Sciatic nerve (tissue), 2 donors: ENCODE measurements at regions of chr3 and their contacts with region 1.

Region 1: DNA sequence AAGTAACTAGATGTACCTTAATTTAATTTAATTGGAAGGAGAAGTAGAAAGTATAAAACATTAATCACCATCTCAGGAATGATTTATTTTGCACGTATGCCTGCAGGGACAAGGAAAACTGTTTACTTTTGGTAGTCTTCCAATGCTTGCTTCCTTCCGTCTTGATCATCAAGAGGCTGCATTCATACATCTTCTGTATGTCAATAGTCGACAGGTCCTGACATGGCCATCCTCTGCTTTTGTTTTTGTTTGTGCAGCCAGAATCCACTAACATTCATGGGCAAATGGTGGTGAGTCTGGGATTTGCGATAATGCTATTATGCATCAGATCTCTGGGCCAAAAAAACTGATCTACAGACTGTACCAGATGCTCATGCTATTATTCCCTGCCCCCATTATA is 56.6 kb upstream of the ZPLD1 start:
- DNase-seq: no peak
- ATAC-seq: no peak

Region 2: GRCh38 chr3:102361101-102361500 is 17.1 kb before region 1 on chr3:
- intact Hi-C with region 1: loop called (anchors 1 kb)
- DNase-seq: no peak
- ATAC-seq: no peak

Region 3: GRCh38 chr3:102605153-102605552 is 226.9 kb after region 1 on chr3:
- intact Hi-C with region 1: no loop called
- DNase-seq: no peak
- ATAC-seq: no peak

Region 4: DNA sequence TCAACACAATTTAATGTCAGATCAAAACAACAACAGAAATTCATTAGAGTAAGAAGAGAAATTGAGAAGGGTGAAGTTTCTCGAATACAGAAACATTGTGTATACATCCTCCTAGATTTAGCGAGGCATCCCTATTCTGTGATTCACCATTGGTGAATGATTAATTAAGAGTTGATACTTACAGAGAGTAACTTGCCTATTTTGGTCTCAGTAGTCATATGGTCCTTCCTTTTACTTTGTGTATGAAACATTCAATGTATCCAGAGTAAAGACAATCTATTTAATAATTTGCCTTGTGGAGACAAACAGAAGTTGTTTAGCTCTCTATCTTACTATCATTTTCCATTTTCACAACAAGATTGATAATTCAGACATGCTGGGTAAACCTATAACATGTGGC is 488.6 kb after region 1 on chr3:
- intact Hi-C with region 1: no loop called
- DNase-seq: no peak
- ATAC-seq: no peak